Breast epithelium (tissue), 4 donors: ENCODE measurements at regions of chr2 and their contacts with region 1.

Region 1: DNA sequence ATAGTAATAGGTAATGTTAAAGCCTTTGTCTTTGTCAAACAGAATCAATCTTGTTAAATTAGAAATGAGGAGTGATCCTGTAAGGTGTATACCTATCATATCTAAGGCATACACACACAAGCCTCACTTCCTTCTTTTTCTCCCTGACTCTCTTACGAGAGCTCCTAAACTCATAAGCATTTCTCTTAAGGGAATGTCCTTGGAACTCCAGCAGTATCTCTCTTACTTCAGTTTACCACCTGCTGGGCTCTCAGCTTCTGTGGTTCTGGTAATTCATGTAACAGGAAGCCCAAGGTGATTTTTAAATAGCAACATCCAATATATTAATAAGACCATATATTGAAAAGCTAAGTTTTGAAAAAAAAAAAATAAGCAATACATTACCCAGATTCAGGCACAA is 85.9 kb downstream of the UBE2E3 start:
- DNase-seq: no peak
- H3K4me3 ChIP-seq: no peak overlapping the region
- H3K27ac ChIP-seq: no peak overlapping the region
- H3K4me1 ChIP-seq: no peaks in the 10 kb centered on the region
- H3K27me3 ChIP-seq: no peaks in the 10 kb centered on the region
- CTCF ChIP-seq: no peak
- POLR2A ChIP-seq: no peak

Region 2: GRCh38 chr2:181077128-181077709 is 10.9 kb after region 1 on chr2:
- intact Hi-C with region 1: no loop called
- DNase-seq: no peak
- H3K4me3 ChIP-seq: no peak overlapping the region
- H3K27ac ChIP-seq: no peak overlapping the region
- H3K4me1 ChIP-seq: no peaks in the 10 kb centered on the region
- H3K27me3 ChIP-seq: no peaks in the 10 kb centered on the region
- CTCF ChIP-seq: peak in 2 of 3 donors; percentile 49 to 50
- POLR2A ChIP-seq: no peak

Region 3: DNA sequence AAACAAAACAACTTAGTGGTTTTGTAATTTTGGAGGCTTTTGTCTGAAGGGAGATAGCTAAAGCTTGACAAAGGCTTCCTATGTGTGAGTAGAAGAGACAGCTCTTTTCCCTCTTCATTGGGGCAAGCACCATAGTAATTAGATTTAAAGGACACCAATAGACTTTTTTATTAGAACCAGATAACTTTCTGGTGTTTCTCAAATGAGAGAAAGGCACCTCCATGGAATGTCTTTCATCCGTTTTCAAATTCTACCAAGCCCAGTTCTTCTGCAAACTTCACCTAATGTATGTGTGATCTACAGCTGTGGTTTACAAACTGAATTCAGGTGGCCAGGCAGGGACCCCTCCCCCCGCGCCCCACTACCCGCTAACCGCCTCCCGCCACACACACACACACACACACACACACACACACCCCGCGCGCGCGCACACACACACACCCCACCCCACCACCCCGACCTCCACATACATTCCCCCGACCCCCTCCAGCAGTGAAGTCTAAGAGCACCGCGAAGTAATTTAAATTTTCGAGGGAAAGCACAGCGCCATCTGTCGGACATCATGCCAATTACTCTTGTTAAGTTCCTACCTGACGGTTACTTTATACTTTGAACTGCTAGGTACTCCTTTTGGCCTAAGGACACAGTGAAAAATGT is 887.7 kb after region 1 on chr2:
- intact Hi-C with region 1: loop called (anchors 5 kb)
- DNase-seq: peak; percentile 24 to 61
- H3K4me3 ChIP-seq: peak overlapping the region; percentile 12 to 60 (median 37)
- H3K27ac ChIP-seq: no peak overlapping the region
- H3K4me1 ChIP-seq: no peaks in the 10 kb centered on the region
- H3K27me3 ChIP-seq: no peaks in the 10 kb centered on the region
- CTCF ChIP-seq: peak in 2 of 3 donors; percentile 25 to 34
- POLR2A ChIP-seq: no peak